ENCODE measurements at regions of chr5 and their contacts with region 1.

Region 1: DNA sequence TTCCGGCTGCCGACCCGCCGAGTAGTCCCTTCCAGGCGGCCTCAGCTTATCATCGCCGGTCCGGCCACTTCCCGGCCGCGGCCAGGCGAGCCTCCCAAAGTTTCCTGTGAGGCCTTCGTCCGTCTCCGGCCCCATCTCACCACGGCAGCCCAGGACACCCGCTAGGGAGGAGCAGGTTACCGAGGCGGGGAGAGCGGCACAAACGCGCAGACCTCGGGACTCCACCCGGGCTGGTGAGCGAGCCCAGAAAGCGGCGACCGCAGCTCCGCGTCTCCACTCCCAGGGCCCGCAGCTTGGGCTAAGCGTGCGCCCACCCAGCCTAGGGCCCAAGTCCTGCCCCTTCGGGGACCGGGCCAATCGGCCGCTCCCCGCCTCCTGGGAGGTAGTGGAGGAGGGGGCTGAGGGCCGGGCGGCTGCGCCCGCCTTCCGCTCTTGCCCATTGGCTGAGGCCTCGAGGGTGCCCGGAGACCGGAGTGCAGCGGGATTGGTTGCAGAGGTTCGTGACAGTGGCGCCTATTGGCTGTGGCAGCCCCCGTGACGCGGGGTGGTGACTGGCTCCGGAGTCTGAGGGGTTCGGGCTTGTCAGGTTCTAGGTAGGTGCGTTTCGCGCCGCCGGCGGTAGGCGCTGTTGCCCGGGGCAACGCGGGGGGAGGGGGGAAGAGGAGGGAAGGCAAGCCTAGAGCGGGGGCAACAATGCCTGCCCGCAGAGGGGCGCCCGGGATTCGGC is 867 bp downstream of the FER start:
- DNase-seq: peak; percentile 99
- ATAC-seq: peak; percentile 94
- H3K4me3 Mint-ChIP-seq: peak overlapping the region; percentile 85
- H3K27ac Mint-ChIP-seq: peak overlapping the region; percentile 93
- H3K4me1 Mint-ChIP-seq: peaks cover 21% of the 10 kb centered on the region
- H3K27me3 Mint-ChIP-seq: peaks cover 3% of the 10 kb centered on the region
- CTCF ChIP-seq: no peak

Region 2: GRCh38 chr5:108727651-108728565 is 20.7 kb before region 1 on chr5:
- CTCF ChIA-PET with region 1: interaction called, 3 read pairs
- POLR2A ChIA-PET with region 1: interaction called, 29 read pairs
- intact Hi-C with region 1: no loop called
- DNase-seq: peak; percentile 61
- ATAC-seq: peak; percentile 81
- H3K4me3 Mint-ChIP-seq: peak overlapping the region; percentile 65
- H3K27ac Mint-ChIP-seq: peak overlapping the region; percentile 42
- H3K4me1 Mint-ChIP-seq: peaks cover 28% of the 10 kb centered on the region
- H3K27me3 Mint-ChIP-seq: peaks cover 29% of the 10 kb centered on the region
- CTCF ChIP-seq: no peak

Region 3: GRCh38 chr5:108762660-108763059 is 14.1 kb after region 1 on chr5:
- CTCF ChIA-PET with region 1: no interaction called
- POLR2A ChIA-PET with region 1: no interaction called
- intact Hi-C with region 1: no loop called
- DNase-seq: no peak
- ATAC-seq: no peak
- H3K4me3 Mint-ChIP-seq: no peak overlapping the region
- H3K27ac Mint-ChIP-seq: no peak overlapping the region
- H3K4me1 Mint-ChIP-seq: peaks cover 23% of the 10 kb centered on the region
- H3K27me3 Mint-ChIP-seq: no peaks in the 10 kb centered on the region
- CTCF ChIP-seq: no peak

Region 4: DNA sequence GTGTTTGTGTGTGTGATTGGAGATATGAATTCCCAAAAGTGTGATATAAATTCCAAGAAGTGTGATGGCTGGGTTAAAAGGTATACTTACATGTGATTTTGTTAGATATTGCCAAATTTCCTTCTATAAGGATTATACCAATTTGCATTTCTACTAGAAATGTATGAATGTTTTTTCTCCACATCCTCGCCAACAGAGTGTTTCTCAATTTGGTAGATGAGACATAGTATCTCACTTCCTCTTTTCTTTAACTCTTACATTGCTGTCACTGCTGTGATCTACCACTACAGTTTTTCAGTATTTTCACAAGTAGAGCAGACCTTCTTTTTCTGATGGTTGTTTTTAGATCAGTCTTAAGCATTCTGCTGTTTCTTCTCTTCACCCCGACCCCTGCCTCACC is 110.4 kb after region 1 on chr5:
- CTCF ChIA-PET with region 1: no interaction called
- POLR2A ChIA-PET with region 1: no interaction called
- intact Hi-C with region 1: no loop called
- DNase-seq: no peak
- ATAC-seq: no peak
- H3K4me3 Mint-ChIP-seq: no peak overlapping the region
- H3K27ac Mint-ChIP-seq: no peak overlapping the region
- H3K4me1 Mint-ChIP-seq: peaks cover 3% of the 10 kb centered on the region
- H3K27me3 Mint-ChIP-seq: no peaks in the 10 kb centered on the region
- CTCF ChIP-seq: no peak

Region 5: DNA sequence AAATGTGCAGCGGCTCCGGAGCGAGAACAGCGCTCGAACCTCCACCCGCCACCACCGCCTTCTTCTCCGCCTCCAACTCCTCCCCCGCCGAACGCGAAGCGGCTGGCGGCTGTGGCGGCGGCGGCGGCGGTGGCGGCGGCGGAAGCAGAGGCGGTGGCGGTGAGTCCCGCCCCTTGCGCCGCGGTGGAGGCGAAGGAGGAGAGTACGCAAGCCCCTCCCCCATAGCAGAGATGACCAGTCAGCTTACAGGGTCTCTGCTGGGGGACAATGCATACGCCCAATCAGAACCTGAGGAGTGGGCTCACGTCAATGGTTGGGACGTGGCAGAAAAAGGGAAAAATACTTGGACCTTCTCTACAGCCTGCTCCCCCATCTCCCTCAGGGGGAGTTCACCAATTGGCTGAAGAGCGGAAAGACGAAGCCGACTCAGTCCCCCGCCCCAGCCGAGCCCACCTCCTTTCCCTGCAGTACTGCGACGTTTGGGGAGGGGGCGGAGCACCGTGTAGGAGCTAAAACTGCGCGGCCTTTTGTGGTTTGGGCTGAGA is 661.4 kb after region 1 on chr5 and contains the start of gene PJA2:
- CTCF ChIA-PET with region 1: no interaction called
- POLR2A ChIA-PET with region 1: interaction called, 3 read pairs
- intact Hi-C with region 1: loop called (anchors 5 kb)
- DNase-seq: peak; percentile 99
- ATAC-seq: peak; percentile 85
- H3K4me3 Mint-ChIP-seq: peak within 1 kb of the TSS; percentile 90
- H3K27ac Mint-ChIP-seq: peak within 1 kb of the TSS; percentile 99
- H3K4me1 Mint-ChIP-seq: peaks cover 46% of the 10 kb centered on the region
- H3K27me3 Mint-ChIP-seq: no peaks in the 10 kb centered on the region
- CTCF ChIP-seq: no peak
- total RNA-seq, gene PJA2: 65.2 to 67.4 TPM